PC-3 (cell line): ENCODE measurements at regions of chr10 and their contacts with region 1.

Region 1: GRCh38 chr10:61835069-61835945 is 66.2 kb upstream of the ARID5B start:
- DNase-seq: peak; percentile 96
- ATAC-seq: peak; percentile 34
- H3K4me3 ChIP-seq: peak overlapping the region; percentile 25
- H3K27ac ChIP-seq: peak overlapping the region; percentile 66
- H3K4me1 ChIP-seq: peaks cover 50% of the 10 kb centered on the region
- H3K27me3 ChIP-seq: no peaks in the 10 kb centered on the region
- CTCF ChIP-seq: peak; percentile 99

Region 2: GRCh38 chr10:61271127-61271823 is 564.0 kb before region 1 on chr10:
- CTCF ChIA-PET with region 1: interaction called, 4 read pairs
- POLR2A ChIA-PET with region 1: no interaction called
- intact Hi-C with region 1: loop called (anchors 2 kb)
- DNase-seq: peak; percentile 100
- ATAC-seq: peak; percentile 100
- H3K4me3 ChIP-seq: peak overlapping the region; percentile 3; the same call in 1 of the 2 replicates
- H3K27ac ChIP-seq: peak overlapping the region; percentile 1; the same call in 1 of the 2 replicates
- H3K4me1 ChIP-seq: peaks cover 14% of the 10 kb centered on the region
- H3K27me3 ChIP-seq: no peaks in the 10 kb centered on the region
- CTCF ChIP-seq: peak; percentile 99

Region 3: GRCh38 chr10:61621605-61622060 is 213.7 kb before region 1 on chr10:
- CTCF ChIA-PET with region 1: no interaction called
- POLR2A ChIA-PET with region 1: no interaction called
- intact Hi-C with region 1: loop called (anchors 5 kb)
- DNase-seq: peak; percentile 89
- ATAC-seq: peak; percentile 92
- H3K4me3 ChIP-seq: peak overlapping the region; percentile 34
- H3K27ac ChIP-seq: no peak overlapping the region
- H3K4me1 ChIP-seq: peaks cover 11% of the 10 kb centered on the region
- H3K27me3 ChIP-seq: no peaks in the 10 kb centered on the region
- CTCF ChIP-seq: no peak

Region 4: DNA sequence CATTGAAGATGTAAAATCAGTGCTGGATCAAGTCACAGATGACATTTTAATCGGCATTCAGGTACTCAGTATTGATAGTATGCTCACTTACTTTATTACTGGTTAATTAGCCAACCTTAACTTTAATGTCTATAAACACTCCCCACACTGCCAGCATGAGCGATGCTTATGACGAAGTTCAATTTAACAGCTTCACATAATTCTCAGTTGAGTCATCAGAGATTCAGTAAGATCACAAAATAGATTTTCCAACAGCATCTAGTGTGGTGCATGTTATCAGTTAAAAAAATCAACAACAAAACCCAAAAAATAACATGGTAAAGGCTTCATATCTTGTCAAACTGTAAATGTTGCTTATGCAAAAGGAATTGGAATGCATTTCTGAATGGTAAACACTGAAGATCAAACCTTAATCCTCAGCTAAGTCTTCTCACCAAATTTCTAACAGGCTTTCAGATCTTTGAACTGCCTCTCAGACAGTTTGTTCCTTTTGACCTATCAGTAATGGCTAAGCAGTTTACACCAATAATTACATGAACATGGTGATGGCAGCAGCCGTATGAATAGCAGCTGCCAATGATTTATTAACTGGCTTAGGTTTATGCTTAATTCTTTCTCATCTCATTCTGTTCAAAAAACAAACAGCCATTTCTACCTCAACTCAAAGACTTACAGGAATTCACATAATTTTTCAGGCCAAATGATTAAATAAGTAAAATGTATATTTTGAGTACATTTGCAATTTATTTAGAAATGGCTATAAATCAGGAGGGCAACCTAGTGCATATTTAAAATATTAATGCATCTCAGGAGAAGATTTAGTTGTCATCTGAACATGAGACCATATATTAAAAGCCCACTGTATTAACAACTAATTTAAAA is 74.1 kb before region 1 on chr10:
- CTCF ChIA-PET with region 1: interaction called, 3 read pairs
- POLR2A ChIA-PET with region 1: interaction called, 11 read pairs
- intact Hi-C with region 1: loop called (anchors 1 kb)
- DNase-seq: peak; percentile 99
- ATAC-seq: peak; percentile 66
- H3K4me3 ChIP-seq: peak overlapping the region; percentile 4; the same call in 1 of the 2 replicates
- H3K27ac ChIP-seq: peak overlapping the region; percentile 77
- H3K4me1 ChIP-seq: peaks cover 53% of the 10 kb centered on the region
- H3K27me3 ChIP-seq: no peaks in the 10 kb centered on the region
- CTCF ChIP-seq: no peak

Region 5: DNA sequence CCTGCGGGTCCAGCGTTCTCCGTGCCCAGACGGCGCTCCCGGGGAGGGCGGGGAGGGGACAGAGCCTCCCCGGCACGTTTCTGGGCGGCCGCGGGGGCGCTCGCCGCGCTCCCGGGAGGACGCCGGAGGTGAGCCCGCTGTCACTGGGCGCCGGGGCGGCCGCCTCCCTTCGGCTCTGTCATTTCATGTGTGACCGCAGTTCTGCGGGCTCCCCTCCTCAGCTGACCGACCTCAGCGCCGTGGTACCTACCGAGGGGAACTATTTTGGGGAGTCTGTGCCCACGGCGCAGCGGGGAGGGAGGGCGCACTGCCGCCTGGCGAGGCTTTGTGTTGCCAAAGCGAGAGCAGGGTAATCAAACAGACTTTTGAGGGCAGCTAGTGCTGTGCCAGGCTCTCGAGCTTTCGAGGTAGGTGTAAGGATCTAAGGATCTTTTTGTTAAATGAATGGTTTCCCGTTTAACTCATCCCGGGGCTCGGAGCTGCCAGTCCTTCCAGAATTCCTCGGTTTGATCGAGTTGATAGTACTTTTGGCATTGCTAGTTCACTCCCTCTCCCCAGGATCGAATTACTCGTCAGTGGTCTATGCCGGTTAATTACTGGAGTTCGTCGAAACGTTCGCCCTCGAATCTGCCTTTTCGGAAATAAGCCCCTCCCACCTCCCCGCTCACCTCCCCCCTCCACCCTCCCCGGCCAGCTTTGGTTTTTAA is 68.1 kb after region 1 on chr10:
- CTCF ChIA-PET with region 1: interaction called, 28 read pairs
- POLR2A ChIA-PET with region 1: interaction called, 24 read pairs
- intact Hi-C with region 1: loop called (anchors 1 kb)
- DNase-seq: peak; percentile 78
- ATAC-seq: peak; percentile 30
- H3K4me3 ChIP-seq: peak overlapping the region; percentile 75
- H3K27ac ChIP-seq: peak overlapping the region; percentile 52
- H3K4me1 ChIP-seq: peaks cover 30% of the 10 kb centered on the region
- H3K27me3 ChIP-seq: no peaks in the 10 kb centered on the region
- CTCF ChIP-seq: peak; percentile 66

Region 6: DNA sequence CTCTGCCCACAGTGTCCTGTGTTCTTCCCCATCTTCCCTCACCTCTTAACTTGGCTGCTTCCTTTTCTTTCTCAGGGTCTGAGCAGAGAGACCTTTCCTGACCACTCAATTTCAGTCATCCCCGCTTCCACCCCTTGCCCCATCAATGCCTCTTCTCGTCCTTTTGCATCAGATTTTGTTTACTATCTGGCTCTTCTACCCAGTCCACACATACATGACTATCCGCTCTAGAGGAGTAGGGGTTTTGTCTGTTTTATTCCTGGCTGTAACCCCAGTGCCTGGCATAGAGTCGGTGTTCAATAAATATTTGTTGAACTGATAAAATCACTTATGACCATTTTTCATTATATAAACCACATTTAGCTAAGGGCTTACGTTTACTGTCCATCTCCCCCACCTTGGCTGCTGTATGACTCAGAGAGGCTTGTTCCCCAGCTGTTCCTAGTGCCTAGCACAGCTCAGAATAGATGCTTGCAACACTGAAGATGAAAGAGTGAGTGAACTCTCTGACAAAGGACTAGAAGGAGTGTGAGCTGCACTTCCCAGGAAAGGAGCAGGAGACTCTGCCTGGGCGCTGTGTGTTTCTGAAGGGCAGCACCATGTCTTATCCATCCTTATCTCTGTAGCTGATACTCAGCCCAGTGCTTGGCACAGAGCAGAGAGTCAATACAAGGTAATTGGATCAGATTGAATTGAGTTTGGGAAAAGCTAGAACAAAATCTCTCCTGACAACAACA is 88.1 kb after region 1 on chr10:
- CTCF ChIA-PET with region 1: no interaction called
- POLR2A ChIA-PET with region 1: no interaction called
- intact Hi-C with region 1: no loop called
- DNase-seq: peak; percentile 92
- ATAC-seq: peak; percentile 92
- H3K4me3 ChIP-seq: no peak overlapping the region
- H3K27ac ChIP-seq: peak overlapping the region; percentile 19
- H3K4me1 ChIP-seq: peaks cover 16% of the 10 kb centered on the region
- H3K27me3 ChIP-seq: no peaks in the 10 kb centered on the region
- CTCF ChIP-seq: no peak

Region 7: GRCh38 chr10:62244780-62245467 is 409.6 kb after region 1 on chr10:
- CTCF ChIA-PET with region 1: no interaction called
- POLR2A ChIA-PET with region 1: no interaction called
- intact Hi-C with region 1: loop called (anchors 1 kb)
- DNase-seq: peak; percentile 99
- ATAC-seq: peak; percentile 42
- H3K4me3 ChIP-seq: no peak overlapping the region
- H3K27ac ChIP-seq: peak overlapping the region; percentile 3
- H3K4me1 ChIP-seq: peaks cover 60% of the 10 kb centered on the region
- H3K27me3 ChIP-seq: no peaks in the 10 kb centered on the region
- CTCF ChIP-seq: peak; percentile 100